HepG2 (cell line): ENCODE measurements at regions of chr9 and their contacts with region 1.

Region 1: DNA sequence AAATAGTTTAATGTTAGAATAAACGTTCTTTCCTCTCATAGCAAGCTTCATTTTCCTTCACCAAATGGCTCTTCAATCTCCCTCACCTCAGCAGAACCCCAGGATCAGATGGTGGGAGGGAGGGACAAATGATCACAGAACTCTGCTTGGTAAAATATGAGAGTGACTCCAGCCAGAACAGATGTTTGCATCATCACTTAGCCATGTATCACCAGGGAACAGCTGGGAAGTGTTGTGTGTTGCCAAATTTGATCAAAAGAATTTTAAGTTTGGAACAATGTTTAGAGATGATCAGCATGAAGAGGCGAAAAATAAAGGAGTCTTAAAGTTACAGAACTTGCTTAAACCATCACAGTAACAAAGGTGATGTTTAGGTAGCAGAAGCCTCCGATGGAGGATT is 115.7 kb downstream of the FRMD3 start:
- DNase-seq: no peak
- ATAC-seq: no peak
- H3K4me3 ChIP-seq: no peak overlapping the region
- H3K27ac ChIP-seq: peak overlapping the region; percentile 87
- H3K4me1 ChIP-seq: peaks cover 75% of the 10 kb centered on the region
- H3K27me3 ChIP-seq: no peaks in the 10 kb centered on the region
- CTCF ChIP-seq: no peak
- EP300 ChIP-seq: no peak
- POLR2A ChIP-seq: no peak
- RAD21 ChIP-seq: no peak

Region 2: DNA sequence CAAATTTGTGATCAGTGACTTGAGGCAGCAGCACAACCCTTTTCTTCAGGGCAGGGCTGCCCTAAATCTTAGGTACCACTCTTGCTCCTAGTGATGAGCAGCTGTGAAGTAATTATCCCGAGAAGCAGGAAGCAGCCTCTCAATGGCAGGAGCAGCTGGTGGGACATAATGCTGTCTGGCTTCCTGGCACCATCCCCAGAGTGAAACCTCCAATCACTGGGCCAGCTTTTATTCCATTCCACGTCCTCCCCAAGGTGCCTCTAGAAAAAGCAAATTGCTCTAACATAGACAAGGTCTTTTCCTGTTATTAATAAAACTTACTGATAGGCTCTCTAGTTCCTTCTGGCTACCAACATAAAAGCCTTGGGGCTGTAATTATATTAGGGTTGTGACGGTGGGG is 38.3 kb before region 1 on chr9:
- CTCF ChIA-PET with region 1: no interaction called
- POLR2A ChIA-PET with region 1: interaction called, 7 read pairs
- in situ Hi-C with region 1: no loop called
- intact Hi-C with region 1: loop called (anchors 2 kb)
- DNase-seq: no peak
- ATAC-seq: no peak
- H3K4me3 ChIP-seq: no peak overlapping the region
- H3K27ac ChIP-seq: no peak overlapping the region
- H3K4me1 ChIP-seq: peaks cover 53% of the 10 kb centered on the region
- H3K27me3 ChIP-seq: no peaks in the 10 kb centered on the region
- CTCF ChIP-seq: no peak
- EP300 ChIP-seq: no peak
- POLR2A ChIP-seq: no peak
- RAD21 ChIP-seq: no peak

Region 3: DNA sequence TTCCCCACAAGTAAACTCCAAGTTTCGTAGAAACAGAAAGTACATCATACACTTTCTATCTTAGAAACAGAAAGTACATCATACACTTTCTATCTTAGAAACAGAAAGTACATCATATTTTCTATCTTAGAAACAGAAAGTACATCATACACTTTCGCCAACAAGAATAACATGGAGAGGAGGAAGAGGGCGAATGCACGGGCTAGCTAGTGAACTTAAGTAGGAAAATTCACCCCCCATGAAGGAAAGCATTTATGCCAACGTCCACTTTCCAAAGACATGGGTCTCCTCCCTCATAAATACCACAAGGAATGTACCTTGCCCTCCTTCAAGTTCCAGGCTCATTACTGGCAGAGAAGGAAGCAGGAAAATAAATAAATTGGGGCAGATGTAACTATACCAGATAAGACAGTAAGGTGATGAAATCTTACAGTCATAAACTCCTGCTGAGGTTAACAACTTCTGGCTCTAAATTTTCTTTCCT is 51.0 kb after region 1 on chr9:
- CTCF ChIA-PET with region 1: no interaction called
- POLR2A ChIA-PET with region 1: interaction called, 4 read pairs
- in situ Hi-C with region 1: no loop called
- intact Hi-C with region 1: loop called (anchors 1 kb)
- DNase-seq: no peak
- ATAC-seq: no peak
- H3K4me3 ChIP-seq: no peak overlapping the region
- H3K27ac ChIP-seq: peak overlapping the region; percentile 86
- H3K4me1 ChIP-seq: peaks cover 58% of the 10 kb centered on the region
- H3K27me3 ChIP-seq: no peaks in the 10 kb centered on the region
- CTCF ChIP-seq: no peak
- EP300 ChIP-seq: no peak
- POLR2A ChIP-seq: no peak
- RAD21 ChIP-seq: no peak

Region 4: DNA sequence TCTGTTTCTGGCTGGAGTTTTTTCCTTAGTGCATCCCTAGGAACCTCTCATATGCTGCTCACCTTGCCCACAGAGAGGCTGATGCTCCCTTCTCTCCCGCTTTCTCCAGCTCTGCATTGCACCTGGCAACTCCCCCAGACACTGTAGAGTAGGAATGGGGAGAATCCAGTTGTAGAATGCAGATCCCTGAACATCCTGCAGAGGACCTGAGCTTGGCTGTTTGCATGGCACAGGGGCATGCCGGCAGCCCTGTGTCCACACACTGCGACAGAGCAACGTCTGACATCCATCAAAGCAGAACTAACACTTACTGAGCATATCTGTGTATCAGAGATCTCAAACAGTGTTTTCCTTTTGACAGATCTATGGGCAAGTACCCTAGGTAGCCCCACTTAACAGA is 220.3 kb after region 1 on chr9:
- CTCF ChIA-PET with region 1: no interaction called
- POLR2A ChIA-PET with region 1: no interaction called
- in situ Hi-C with region 1: no loop called
- intact Hi-C with region 1: no loop called
- DNase-seq: no peak
- ATAC-seq: peak; percentile 81
- H3K4me3 ChIP-seq: no peak overlapping the region
- H3K27ac ChIP-seq: no peak overlapping the region
- H3K4me1 ChIP-seq: peaks cover 3% of the 10 kb centered on the region
- H3K27me3 ChIP-seq: no peaks in the 10 kb centered on the region
- CTCF ChIP-seq: no peak
- EP300 ChIP-seq: no peak
- POLR2A ChIP-seq: no peak
- RAD21 ChIP-seq: no peak